ENCODE measurements at regions of chr13 and their contacts with region 1.

Region 1: DNA sequence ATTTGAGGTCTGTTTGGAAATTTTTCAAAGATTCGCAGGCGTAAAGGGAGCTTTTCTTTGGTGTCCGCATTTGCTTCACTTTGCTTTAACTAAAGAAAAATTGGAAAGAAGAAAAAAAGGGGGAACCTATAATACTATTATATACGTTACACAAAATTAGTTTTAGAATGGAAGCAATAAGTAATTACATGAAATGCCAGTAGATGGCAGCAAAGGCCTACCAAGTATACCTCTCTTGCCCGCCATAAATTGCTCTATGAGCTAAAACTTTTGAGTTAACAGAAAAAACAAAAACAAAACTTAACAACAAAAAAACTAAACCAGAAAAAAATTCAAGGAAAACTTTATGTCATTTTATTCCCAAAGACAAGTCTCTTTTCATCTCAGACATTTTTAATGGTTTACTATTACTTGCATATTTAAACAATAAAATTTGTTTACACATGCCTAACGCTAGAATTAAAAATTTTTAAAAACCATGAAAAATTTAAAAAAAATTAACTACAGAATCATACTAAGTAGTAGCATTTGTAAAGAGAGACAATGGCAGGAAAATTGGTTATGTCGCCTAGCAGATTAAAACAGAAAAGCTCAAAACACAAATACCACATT is 271.4 kb downstream of the NALCN start:
- DNase-seq: peak; percentile 18
- ATAC-seq: no peak
- H3K4me3 Mint-ChIP-seq: no peak overlapping the region
- H3K27ac Mint-ChIP-seq: no peak overlapping the region
- H3K4me1 Mint-ChIP-seq: no peaks in the 10 kb centered on the region
- H3K27me3 Mint-ChIP-seq: peaks cover 28% of the 10 kb centered on the region

Region 2: GRCh38 chr13:99709134-99709533 is 1435.8 kb before region 1 on chr13:
- CTCF ChIA-PET with region 1: no interaction called
- POLR2A ChIA-PET with region 1: no interaction called
- intact Hi-C with region 1: no loop called
- DNase-seq: no peak
- ATAC-seq: no peak
- H3K4me3 Mint-ChIP-seq: no peak overlapping the region
- H3K27ac Mint-ChIP-seq: no peak overlapping the region
- H3K4me1 Mint-ChIP-seq: no peaks in the 10 kb centered on the region
- H3K27me3 Mint-ChIP-seq: no peaks in the 10 kb centered on the region

Region 3: DNA sequence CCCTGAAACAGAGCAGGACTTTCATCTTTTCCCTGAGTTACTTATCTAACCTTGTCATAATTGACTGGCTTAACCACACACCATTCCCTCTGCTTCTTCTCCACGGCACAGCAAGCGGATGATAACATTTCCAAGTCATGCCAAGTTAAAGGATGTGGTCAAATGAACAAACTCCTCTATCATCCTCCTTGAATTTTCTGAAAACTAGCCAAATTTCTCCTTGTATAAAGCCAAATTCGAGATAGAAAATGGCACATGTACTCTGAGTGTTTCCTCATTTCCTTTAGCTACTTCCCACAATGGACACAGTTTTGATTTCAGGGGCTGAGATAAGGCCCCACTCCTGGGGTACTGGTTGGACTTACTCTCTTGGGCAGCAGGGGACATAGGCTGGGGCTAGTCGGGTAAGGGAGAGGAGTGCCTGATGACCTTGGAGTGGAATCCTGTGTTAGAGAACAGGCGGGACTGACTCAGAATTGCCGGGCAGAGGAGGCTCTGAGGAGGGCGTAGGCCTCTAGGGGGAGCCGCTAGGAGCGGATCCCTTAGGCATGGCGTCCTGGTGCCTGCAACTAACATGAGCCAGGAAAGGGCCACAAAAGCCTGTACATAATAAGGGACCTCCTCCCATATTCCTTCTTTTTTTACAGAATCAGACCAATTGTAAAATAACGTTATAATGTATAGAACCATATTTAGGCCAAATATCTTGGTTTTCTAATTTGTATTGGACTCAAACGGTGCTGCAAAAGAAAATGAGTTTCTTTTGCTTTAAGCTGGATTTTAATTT is 450.0 kb before region 1 on chr13:
- CTCF ChIA-PET with region 1: no interaction called
- POLR2A ChIA-PET with region 1: no interaction called
- intact Hi-C with region 1: no loop called
- DNase-seq: peak; percentile 39
- ATAC-seq: peak; percentile 42
- H3K4me3 Mint-ChIP-seq: no peak overlapping the region
- H3K27ac Mint-ChIP-seq: no peak overlapping the region
- H3K4me1 Mint-ChIP-seq: no peaks in the 10 kb centered on the region
- H3K27me3 Mint-ChIP-seq: peaks cover 21% of the 10 kb centered on the region

Region 4: DNA sequence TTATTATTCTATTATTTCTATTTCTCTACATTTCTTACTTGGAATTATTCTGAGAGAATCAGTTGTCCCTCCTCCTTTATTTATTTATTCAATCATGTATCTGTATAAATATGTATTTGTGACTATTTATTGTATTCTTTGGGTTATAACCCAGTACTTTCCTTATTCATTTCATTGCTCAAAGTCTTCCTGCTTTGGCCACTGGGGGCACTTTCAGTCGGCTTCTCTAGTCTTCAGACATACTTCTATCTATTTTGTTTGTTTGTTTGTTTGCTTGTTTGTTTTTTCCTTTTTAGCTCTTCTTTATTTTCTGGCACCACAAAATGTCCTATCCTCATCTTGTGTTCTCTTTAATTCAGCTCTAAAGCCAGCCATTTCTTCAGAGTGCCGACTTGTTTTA is 11.0 kb after region 1 on chr13:
- CTCF ChIA-PET with region 1: interaction called, 24 read pairs
- POLR2A ChIA-PET with region 1: no interaction called
- intact Hi-C with region 1: no loop called
- DNase-seq: no peak
- ATAC-seq: no peak
- H3K4me3 Mint-ChIP-seq: no peak overlapping the region
- H3K27ac Mint-ChIP-seq: no peak overlapping the region
- H3K4me1 Mint-ChIP-seq: no peaks in the 10 kb centered on the region
- H3K27me3 Mint-ChIP-seq: peaks cover 23% of the 10 kb centered on the region

Region 5: DNA sequence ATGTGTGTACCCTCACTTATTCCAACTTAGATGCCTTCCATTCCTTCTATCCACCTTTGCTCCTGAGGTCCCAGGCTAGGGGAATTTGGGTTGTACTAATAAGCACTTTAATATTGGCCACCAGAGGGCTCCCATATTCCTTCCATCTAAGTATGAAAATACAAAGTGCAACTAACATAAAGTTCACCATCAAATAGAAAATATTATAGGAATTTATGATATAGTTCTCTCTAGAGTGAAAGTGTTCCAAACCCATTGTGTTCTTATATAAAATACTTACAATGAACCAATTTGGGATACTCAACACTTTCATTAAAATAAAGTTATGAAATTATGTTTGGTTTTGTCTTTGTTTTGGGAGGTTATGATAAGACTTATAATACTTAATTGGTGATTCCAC is 369.9 kb after region 1 on chr13:
- CTCF ChIA-PET with region 1: no interaction called
- POLR2A ChIA-PET with region 1: no interaction called
- intact Hi-C with region 1: loop called (anchors 2 to 5 kb)
- DNase-seq: peak; percentile 19
- ATAC-seq: no peak
- H3K4me3 Mint-ChIP-seq: no peak overlapping the region
- H3K27ac Mint-ChIP-seq: no peak overlapping the region
- H3K4me1 Mint-ChIP-seq: no peaks in the 10 kb centered on the region
- H3K27me3 Mint-ChIP-seq: peaks cover 3% of the 10 kb centered on the region

Region 6: DNA sequence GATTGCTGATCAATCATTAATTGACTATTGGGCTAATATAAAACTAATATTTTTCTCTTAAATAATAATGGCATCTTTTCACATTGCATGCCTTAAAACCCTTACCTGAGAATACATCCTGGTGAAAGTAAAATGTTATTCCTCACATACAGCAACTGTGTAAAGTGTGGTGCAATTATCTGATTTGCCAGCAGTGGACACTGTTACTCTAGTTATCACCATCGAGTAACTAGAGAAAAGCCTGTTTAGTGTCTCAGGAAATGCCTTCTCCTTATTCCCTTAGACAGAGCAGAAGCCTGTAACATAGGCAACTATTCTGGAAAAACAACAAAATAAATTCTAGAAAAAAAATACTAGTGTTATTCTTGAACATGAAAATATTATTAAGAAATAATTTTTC is 797.1 kb after region 1 on chr13:
- CTCF ChIA-PET with region 1: interaction called, 3 read pairs
- POLR2A ChIA-PET with region 1: no interaction called
- intact Hi-C with region 1: loop called in 1 of 2 experiments (anchors 10 kb)
- DNase-seq: no peak
- ATAC-seq: no peak
- H3K4me3 Mint-ChIP-seq: no peak overlapping the region
- H3K27ac Mint-ChIP-seq: no peak overlapping the region
- H3K4me1 Mint-ChIP-seq: no peaks in the 10 kb centered on the region
- H3K27me3 Mint-ChIP-seq: peaks cover 9% of the 10 kb centered on the region

Region 7: GRCh38 chr13:102460801-102461200 is 1315.9 kb after region 1 on chr13:
- CTCF ChIA-PET with region 1: no interaction called
- POLR2A ChIA-PET with region 1: no interaction called
- intact Hi-C with region 1: loop called in 1 of 2 experiments (anchors 2 kb)
- DNase-seq: no peak
- ATAC-seq: no peak
- H3K4me3 Mint-ChIP-seq: no peak overlapping the region
- H3K27ac Mint-ChIP-seq: no peak overlapping the region
- H3K4me1 Mint-ChIP-seq: peaks cover 6% of the 10 kb centered on the region
- H3K27me3 Mint-ChIP-seq: peaks cover 15% of the 10 kb centered on the region

Measured in activated CD4-positive, alpha-beta T cell treated with anti-CD3 and anti-CD28 coated beads for 36 hours (primary cell).